CD4-positive, alpha-beta T cell (primary cell): ENCODE measurements at regions of chr7 and their contacts with region 1.

Region 1: DNA sequence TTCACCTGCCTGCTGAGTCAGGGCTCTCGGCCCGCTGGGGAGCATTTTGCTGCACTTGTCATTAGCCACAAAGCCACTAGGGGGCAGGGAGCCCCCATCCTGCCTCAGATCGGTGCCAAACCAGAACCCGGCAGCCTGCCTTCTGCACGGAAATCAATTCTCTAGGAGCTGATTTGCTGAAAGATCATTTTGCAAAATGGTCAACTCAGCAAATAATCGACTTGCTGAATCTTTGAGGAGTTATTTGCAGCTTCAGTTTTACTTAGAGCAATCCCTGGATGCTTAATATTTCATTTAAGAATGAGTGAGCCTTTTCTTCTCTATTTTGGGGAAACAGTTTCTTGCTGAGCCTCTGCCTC is 1.7 kb upstream of the GIMAP8 start:
- DNase-seq: peak; percentile 83 to 94 (median 88)
- ATAC-seq: peak; percentile 58
- H3K4me3 ChIP-seq: peak overlapping the region; percentile 96
- H3K4me3 Mint-ChIP-seq: peak overlapping the region; percentile 98
- H3K27ac ChIP-seq: peak overlapping the region; percentile 82 to 92
- H3K27ac Mint-ChIP-seq: peak overlapping the region; percentile 78
- H3K4me1 ChIP-seq: peaks cover 69% of the 10 kb centered on the region
- H3K4me1 Mint-ChIP-seq: peaks cover 54% of the 10 kb centered on the region
- H3K27me3 ChIP-seq: no peaks in the 10 kb centered on the region
- H3K27me3 Mint-ChIP-seq: no peaks in the 10 kb centered on the region
- CTCF ChIP-seq: peak; percentile 93

Region 2: DNA sequence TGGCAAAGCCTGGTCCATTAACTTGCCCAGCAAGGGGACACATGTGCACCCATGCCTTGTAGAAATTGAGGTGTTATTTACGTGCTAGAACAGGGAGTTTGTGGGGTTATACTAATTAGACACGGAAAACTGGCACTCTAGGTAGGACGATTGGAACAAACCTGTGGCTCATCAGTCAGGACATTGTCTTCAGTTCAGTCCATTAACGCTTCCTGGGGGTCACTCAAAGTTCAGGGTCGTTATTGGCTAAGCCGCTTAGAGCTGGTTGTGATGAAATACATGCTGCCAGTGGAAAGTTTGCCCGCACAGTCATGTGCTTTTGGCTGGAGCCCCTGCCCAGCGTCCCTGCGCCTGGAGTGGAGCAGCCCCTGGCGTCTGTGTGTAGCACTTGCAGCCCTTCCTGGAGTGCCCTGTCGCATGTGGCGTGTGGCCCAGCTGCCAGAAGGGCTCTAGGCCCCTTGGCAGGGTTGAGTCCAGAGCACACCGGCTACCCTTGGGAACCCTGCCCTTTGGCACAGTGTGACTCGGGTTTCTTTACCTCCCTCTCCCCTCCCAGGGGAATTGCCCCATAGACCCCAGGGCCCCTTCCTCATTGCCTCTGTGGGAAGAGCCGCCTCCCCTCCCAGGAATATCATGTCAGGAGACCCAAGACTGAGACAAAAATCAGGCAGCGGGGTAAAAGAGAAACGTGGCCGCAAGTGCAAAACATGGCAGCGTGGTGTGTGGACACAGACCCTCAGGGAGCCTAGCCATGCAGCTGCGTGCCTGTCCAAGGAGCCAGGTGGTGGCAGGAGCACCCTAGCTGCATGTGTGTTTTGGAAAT is 59.8 kb before region 1 on chr7:
- CTCF ChIA-PET with region 1: no interaction called
- POLR2A ChIA-PET with region 1: no interaction called
- intact Hi-C with region 1: no loop called
- DNase-seq: peak in 2 of 14 experiments; percentile 44 to 50
- ATAC-seq: no peak
- H3K4me3 ChIP-seq: no peak overlapping the region
- H3K4me3 Mint-ChIP-seq: no peak overlapping the region
- H3K27ac ChIP-seq: no peak overlapping the region
- H3K27ac Mint-ChIP-seq: no peak overlapping the region
- H3K4me1 ChIP-seq: peaks cover 3% of the 10 kb centered on the region
- H3K4me1 Mint-ChIP-seq: no peaks in the 10 kb centered on the region
- H3K27me3 ChIP-seq: no peaks in the 10 kb centered on the region
- H3K27me3 Mint-ChIP-seq: no peaks in the 10 kb centered on the region
- CTCF ChIP-seq: no peak

Region 3: DNA sequence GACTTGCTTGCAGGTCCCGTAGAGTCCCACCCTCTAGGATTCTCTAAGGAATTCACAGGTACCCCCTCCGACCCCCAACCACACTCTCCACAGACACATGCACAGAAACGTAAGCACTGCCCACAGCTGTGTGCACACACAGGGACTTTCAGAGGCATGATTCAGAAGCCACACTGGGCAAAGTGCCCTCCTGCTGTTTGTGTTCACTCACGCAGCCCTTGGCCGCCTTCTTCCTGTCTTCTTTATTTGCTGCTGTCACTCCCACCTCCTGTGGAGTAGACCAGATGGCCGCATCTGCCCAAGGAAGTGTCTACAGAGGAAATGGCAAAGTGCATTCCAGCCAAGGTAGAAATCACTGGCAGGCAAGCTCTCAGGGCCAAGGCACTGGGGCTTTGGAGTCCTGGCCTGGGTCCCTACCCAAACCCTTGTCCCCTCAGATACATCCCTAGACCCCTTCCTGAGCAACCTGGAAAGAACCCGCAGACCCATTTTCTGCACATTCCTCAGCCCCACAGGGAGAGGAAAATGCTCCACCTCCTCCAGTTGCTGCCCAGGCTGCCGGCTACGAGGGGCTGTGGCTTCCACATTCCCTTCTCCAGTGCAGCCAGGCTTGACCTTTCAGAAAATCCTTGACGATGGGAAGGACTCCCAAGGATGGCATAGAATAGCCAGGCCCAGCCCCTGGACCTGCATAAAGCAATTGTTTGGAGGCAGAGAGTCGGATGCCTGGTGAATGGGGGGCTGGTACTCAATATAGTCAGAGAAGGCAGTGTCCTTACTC is 19.9 kb before region 1 on chr7:
- CTCF ChIA-PET with region 1: no interaction called
- POLR2A ChIA-PET with region 1: no interaction called
- intact Hi-C with region 1: no loop called
- DNase-seq: peak in 2 of 14 experiments; percentile 41 to 57
- ATAC-seq: no peak
- H3K4me3 ChIP-seq: no peak overlapping the region
- H3K4me3 Mint-ChIP-seq: no peak overlapping the region
- H3K27ac ChIP-seq: no peak overlapping the region
- H3K27ac Mint-ChIP-seq: no peak overlapping the region
- H3K4me1 ChIP-seq: peaks cover 9% of the 10 kb centered on the region
- H3K4me1 Mint-ChIP-seq: peaks cover 12% of the 10 kb centered on the region
- H3K27me3 ChIP-seq: no peaks in the 10 kb centered on the region
- H3K27me3 Mint-ChIP-seq: no peaks in the 10 kb centered on the region
- CTCF ChIP-seq: no peak

Region 4: DNA sequence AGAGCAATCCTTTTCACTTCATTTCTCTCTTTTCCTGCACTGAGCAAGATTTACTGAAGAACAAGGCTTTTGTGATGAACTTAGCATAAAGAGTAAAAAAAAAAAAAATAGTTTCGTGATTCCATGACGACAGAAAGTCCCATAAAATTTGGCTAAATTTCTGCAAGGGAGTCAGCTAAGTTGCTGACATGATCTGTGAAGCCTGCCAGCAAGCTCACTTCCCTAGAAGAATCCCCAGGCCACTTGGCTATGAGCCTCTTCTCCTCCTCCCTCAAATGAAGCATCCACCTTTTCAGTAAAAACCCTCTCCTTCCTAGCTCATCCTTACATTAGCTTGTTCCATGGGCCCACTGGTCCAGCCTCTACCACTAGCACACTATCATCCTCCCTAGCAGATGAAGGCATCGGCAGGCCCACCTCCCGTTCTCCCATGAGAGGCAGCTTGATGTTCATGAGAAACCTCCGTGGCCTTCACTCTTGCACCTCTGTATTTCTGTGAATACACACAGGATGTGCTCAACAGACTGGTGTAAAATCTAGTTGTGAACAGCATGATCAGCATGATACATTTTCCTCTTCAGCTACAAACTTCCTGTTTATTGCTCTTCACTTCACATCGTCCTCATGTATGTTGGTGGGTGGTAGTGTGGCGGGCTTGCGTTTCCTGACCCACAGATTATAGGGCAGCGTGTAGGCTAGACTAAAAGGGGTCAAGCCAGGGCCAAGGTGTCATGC is 32.6 kb after region 1 on chr7:
- CTCF ChIA-PET with region 1: interaction called, 15 read pairs
- POLR2A ChIA-PET with region 1: interaction called, 296 read pairs
- intact Hi-C with region 1: loop called (anchors 2 kb)
- DNase-seq: peak; percentile 36 to 90 (median 58)
- ATAC-seq: peak; percentile 59
- H3K4me3 ChIP-seq: peak overlapping the region; percentile 20
- H3K4me3 Mint-ChIP-seq: peak overlapping the region; percentile 84
- H3K27ac ChIP-seq: peak overlapping the region; percentile 92 to 95
- H3K27ac Mint-ChIP-seq: peak overlapping the region; percentile 97
- H3K4me1 ChIP-seq: peaks cover 76% of the 10 kb centered on the region
- H3K4me1 Mint-ChIP-seq: peaks cover 95% of the 10 kb centered on the region
- H3K27me3 ChIP-seq: no peaks in the 10 kb centered on the region
- H3K27me3 Mint-ChIP-seq: no peaks in the 10 kb centered on the region
- CTCF ChIP-seq: no peak

Region 5: GRCh38 chr7:150514748-150515222 is 66.0 kb after region 1 on chr7 and contains the start of gene GIMAP7:
- CTCF ChIA-PET with region 1: interaction called, 51 read pairs
- POLR2A ChIA-PET with region 1: interaction called, 499 read pairs
- intact Hi-C with region 1: loop called (anchors 1 kb)
- DNase-seq: peak; percentile 59 to 85 (median 70)
- ATAC-seq: peak; percentile 82
- H3K4me3 ChIP-seq: peak within 1 kb of the TSS; percentile 79
- H3K4me3 Mint-ChIP-seq: peak within 1 kb of the TSS; percentile 100
- H3K27ac ChIP-seq: peak within 1 kb of the TSS; percentile 63 to 84
- H3K27ac Mint-ChIP-seq: peak within 1 kb of the TSS; percentile 93
- H3K4me1 ChIP-seq: peaks cover 42% of the 10 kb centered on the region
- H3K4me1 Mint-ChIP-seq: peaks cover 51% of the 10 kb centered on the region
- H3K27me3 ChIP-seq: no peaks in the 10 kb centered on the region
- H3K27me3 Mint-ChIP-seq: no peaks in the 10 kb centered on the region
- CTCF ChIP-seq: no peak
- total RNA-seq, gene GIMAP7: 48.4 to 50.7 TPM

Region 6: GRCh38 chr7:150631866-150632864 is 183.4 kb after region 1 on chr7 and contains the start of gene GIMAP6:
- CTCF ChIA-PET with region 1: interaction called, 4 read pairs
- POLR2A ChIA-PET with region 1: interaction called, 23 read pairs
- intact Hi-C with region 1: loop called (anchors 1 to 5 kb)
- DNase-seq: peak; percentile 21 to 76 (median 49)
- ATAC-seq: peak; percentile 68
- H3K4me3 ChIP-seq: peak within 1 kb of the TSS; percentile 79
- H3K4me3 Mint-ChIP-seq: peak within 1 kb of the TSS; percentile 96
- H3K27ac ChIP-seq: peak within 1 kb of the TSS; percentile 58 to 81
- H3K27ac Mint-ChIP-seq: peak within 1 kb of the TSS; percentile 84
- H3K4me1 ChIP-seq: peaks cover 60% of the 10 kb centered on the region
- H3K4me1 Mint-ChIP-seq: peaks cover 87% of the 10 kb centered on the region
- H3K27me3 ChIP-seq: no peaks in the 10 kb centered on the region
- H3K27me3 Mint-ChIP-seq: no peaks in the 10 kb centered on the region
- CTCF ChIP-seq: no peak
- total RNA-seq, gene GIMAP6: 14.3 to 14.9 TPM

Region 7: GRCh38 chr7:150685219-150686029 is 236.7 kb after region 1 on chr7 and contains the start of gene GIMAP2:
- CTCF ChIA-PET with region 1: interaction called, 14 read pairs
- POLR2A ChIA-PET with region 1: interaction called, 18 read pairs
- intact Hi-C with region 1: loop called in 1 of 2 experiments (anchors 2 kb)
- DNase-seq: peak in 9 of 14 experiments; percentile 22 to 81 (median 48)
- ATAC-seq: peak; percentile 86
- H3K4me3 ChIP-seq: peak within 1 kb of the TSS; percentile 80
- H3K4me3 Mint-ChIP-seq: peak within 1 kb of the TSS; percentile 100
- H3K27ac ChIP-seq: peak within 1 kb of the TSS; percentile 78 to 95
- H3K27ac Mint-ChIP-seq: peak within 1 kb of the TSS; percentile 100
- H3K4me1 ChIP-seq: peaks cover 44% of the 10 kb centered on the region
- H3K4me1 Mint-ChIP-seq: peaks cover 85% of the 10 kb centered on the region
- H3K27me3 ChIP-seq: no peaks in the 10 kb centered on the region
- H3K27me3 Mint-ChIP-seq: no peaks in the 10 kb centered on the region
- CTCF ChIP-seq: no peak
- total RNA-seq, gene GIMAP2: 64.1 to 65.1 TPM

Region 8: DNA sequence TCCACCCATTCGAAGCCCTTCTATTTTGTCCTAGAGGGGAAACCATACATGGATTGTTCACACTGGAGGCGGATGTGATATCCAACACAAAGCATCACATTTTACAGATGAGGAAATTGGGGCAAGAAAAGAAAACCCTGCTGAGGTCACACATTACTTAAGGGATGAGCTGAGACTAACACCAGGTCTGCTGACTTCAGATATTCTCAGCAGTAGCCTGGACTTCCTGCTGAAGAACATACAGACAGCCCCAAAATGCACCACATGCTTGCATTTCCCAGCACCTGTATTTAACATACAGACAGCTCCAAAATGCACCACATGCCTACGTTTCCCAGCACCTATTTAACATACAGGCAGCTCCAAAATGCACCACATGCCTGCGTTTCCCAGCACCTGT is 299.6 kb after region 1 on chr7:
- CTCF ChIA-PET with region 1: interaction called, 16 read pairs
- POLR2A ChIA-PET with region 1: interaction called, 64 read pairs
- intact Hi-C with region 1: loop called in 1 of 2 experiments (anchors 5 kb)
- DNase-seq: peak in 3 of 14 experiments; percentile 54 to 58 (median 57)
- ATAC-seq: peak; percentile 61
- H3K4me3 ChIP-seq: peak overlapping the region; percentile 31
- H3K4me3 Mint-ChIP-seq: peak overlapping the region; percentile 40
- H3K27ac ChIP-seq: peak overlapping the region; percentile 65 to 69
- H3K27ac Mint-ChIP-seq: peak overlapping the region; percentile 87
- H3K4me1 ChIP-seq: peaks cover 93% of the 10 kb centered on the region
- H3K4me1 Mint-ChIP-seq: peaks cover 94% of the 10 kb centered on the region
- H3K27me3 ChIP-seq: no peaks in the 10 kb centered on the region
- H3K27me3 Mint-ChIP-seq: no peaks in the 10 kb centered on the region
- CTCF ChIP-seq: no peak

Region 9: GRCh38 chr7:151459726-151460473 is 1011.1 kb after region 1 on chr7:
- CTCF ChIA-PET with region 1: no interaction called
- POLR2A ChIA-PET with region 1: no interaction called
- intact Hi-C with region 1: no loop called
- DNase-seq: no peak
- ATAC-seq: no peak
- H3K4me3 ChIP-seq: no peak overlapping the region
- H3K4me3 Mint-ChIP-seq: no peak overlapping the region
- H3K27ac ChIP-seq: no peak overlapping the region
- H3K27ac Mint-ChIP-seq: no peak overlapping the region
- H3K4me1 ChIP-seq: peaks cover 3% of the 10 kb centered on the region
- H3K4me1 Mint-ChIP-seq: no peaks in the 10 kb centered on the region
- H3K27me3 ChIP-seq: no peaks in the 10 kb centered on the region
- H3K27me3 Mint-ChIP-seq: peaks cover 6% of the 10 kb centered on the region
- CTCF ChIP-seq: no peak